Activated naive CD4-positive, alpha-beta T cell treated with anti-CD3 and anti-CD28 coated beads for 36 hours (primary cell): ENCODE measurements at regions of chr1 and their contacts with region 1.

Region 1: DNA sequence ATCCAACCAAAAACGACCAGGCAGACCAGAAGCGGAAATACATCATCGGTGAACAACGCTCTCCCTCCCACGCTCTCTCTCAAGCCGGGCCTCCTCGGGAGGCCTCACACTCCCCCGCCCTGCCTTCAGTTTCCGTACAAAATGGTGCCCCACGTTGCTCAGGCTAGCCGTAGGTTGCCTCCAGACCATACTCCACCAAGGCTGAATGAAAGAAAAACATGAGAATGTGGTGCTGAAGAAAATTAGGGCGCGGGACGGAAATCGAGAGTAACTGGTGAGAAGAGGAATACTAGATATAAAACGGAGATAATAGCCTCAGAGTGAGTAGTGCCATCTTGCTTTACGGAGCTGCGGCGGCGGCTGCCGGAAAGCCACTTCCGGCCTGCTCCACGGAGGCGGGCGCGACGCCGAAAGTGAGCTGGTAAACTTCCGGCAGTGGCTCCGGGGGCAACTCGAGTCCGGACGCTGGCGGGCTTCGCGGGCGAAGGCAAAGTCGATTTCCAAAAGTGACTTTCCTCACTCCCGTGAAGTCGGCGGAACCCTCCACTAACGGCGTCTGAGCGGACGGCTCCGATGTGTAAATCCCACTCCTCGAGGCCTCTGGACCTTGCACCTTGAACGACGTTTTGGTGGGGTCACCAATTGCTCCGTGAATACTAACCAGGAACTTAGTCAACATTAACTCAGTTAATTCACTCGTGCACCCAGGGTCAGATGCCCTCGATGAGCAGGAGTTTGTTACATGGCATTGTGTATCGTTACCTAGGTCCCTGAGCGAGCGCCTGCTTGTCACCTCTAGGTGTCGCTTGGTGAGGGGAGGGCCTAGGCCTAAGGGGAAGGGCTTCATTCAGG is at the start of gene SH3BP5L:
- DNase-seq: peak; percentile 95
- H3K4me3 Mint-ChIP-seq: peak within 1 kb of the TSS; percentile 90
- H3K27ac Mint-ChIP-seq: peak within 1 kb of the TSS; percentile 98
- H3K4me1 Mint-ChIP-seq: peaks cover 53% of the 10 kb centered on the region
- H3K27me3 Mint-ChIP-seq: no peaks in the 10 kb centered on the region
- total RNA-seq, gene SH3BP5L: 20.3 to 20.5 TPM

Region 2: DNA sequence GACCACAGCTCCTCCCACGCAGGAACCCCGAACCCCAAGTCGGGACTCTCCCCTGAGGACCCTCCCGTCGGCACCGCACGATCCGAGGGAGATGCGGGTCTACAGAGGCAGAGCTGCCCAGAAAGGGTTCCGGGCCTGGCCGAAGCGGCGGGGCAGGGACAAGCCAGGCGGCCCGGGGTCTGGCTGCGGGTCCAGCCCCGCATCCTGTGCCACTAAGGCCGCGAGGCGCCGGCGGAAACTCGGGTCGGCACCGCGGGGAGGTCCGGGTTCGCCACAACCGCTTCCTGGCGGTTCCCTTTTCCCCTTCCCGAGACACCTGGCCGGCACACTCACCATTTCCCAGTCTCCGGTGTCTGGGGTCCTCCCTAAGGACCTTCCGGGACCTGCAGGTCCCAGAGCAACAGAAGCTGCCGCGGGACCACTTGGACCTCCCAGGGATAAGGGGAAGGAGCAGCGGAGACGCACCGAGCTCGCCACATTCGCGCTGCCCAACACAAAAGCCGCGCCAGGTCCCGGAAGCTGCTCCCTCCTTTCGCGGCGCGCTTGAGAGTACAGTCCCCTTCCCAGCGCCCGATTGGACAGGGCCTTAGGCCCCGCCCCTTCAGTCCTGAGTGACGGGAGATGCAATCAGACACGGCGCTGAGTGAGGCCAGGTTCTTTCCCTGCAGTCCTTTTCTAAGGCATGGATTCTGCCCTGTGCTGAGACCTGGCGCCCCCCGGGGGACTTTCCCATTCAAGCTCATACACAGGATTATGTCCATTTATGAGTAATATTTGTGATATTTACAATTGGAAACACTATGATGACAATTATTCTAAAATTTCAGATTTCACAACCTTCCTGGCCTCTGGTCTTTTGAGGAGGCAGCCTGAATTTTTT is 1747.6 kb before region 1 on chr1 and contains the start of gene ZNF670:
- CTCF ChIA-PET with region 1: no interaction called
- intact Hi-C with region 1: loop called (anchors 2 kb)
- DNase-seq: peak; percentile 98
- H3K4me3 Mint-ChIP-seq: peak within 1 kb of the TSS; percentile 91
- H3K27ac Mint-ChIP-seq: peak within 1 kb of the TSS; percentile 90
- H3K4me1 Mint-ChIP-seq: peaks cover 22% of the 10 kb centered on the region
- H3K27me3 Mint-ChIP-seq: peaks cover 6% of the 10 kb centered on the region
- total RNA-seq, gene ZNF670: 4.1 to 4.3 TPM

Region 3: GRCh38 chr1:248611883-248612414 is 214.2 kb before region 1 on chr1:
- CTCF ChIA-PET with region 1: interaction called, 3 read pairs
- intact Hi-C with region 1: loop called (anchors 5 kb)
- DNase-seq: peak; percentile 53
- H3K4me3 Mint-ChIP-seq: no peak overlapping the region
- H3K27ac Mint-ChIP-seq: no peak overlapping the region
- H3K4me1 Mint-ChIP-seq: peaks cover 29% of the 10 kb centered on the region
- H3K27me3 Mint-ChIP-seq: no peaks in the 10 kb centered on the region

Region 4: GRCh38 chr1:248837794-248838356 is 11.7 kb after region 1 on chr1 and contains the start of gene ZNF672:
- CTCF ChIA-PET with region 1: interaction called, 27 read pairs
- intact Hi-C with region 1: loop called (anchors 1 kb)
- DNase-seq: peak; percentile 96
- H3K4me3 Mint-ChIP-seq: no peak within 1 kb of the TSS
- H3K27ac Mint-ChIP-seq: no peak within 1 kb of the TSS
- H3K4me1 Mint-ChIP-seq: peaks cover 22% of the 10 kb centered on the region
- H3K27me3 Mint-ChIP-seq: peaks cover 2% of the 10 kb centered on the region
- total RNA-seq, gene ZNF672: 51.6 to 53.4 TPM

Region 5: DNA sequence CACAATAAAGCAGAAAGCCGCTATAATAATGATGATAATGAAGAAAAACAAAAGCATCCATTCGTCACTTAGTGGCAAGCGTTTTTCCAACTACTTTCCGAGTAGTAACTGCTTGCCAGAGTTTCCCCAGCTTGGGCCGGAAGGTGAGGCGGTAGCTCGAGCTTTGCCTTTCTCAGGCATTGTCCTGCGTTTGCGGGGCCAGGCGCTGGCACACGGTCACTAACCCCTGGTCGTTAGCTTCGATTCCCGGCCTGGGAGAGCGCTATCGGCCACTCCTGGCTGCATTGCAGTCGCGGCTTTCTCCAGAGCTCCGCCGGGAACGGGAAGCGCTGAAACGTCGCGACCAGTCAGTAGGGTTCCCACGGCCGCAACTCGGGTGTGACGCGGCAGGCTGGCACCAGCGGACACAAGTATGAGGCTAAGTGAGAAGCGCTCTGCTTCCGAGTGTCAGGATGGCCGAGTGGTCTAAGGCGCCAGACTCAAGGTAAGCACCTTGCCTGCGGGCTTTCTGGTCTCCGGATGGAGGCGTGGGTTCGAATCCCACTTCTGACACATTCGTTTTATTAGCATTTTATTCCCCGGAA is 47.4 kb after region 1 on chr1:
- CTCF ChIA-PET with region 1: no interaction called
- intact Hi-C with region 1: loop called (anchors 1 kb)
- DNase-seq: peak; percentile 96
- H3K4me3 Mint-ChIP-seq: peak overlapping the region; percentile 85
- H3K27ac Mint-ChIP-seq: peak overlapping the region; percentile 93
- H3K4me1 Mint-ChIP-seq: peaks cover 16% of the 10 kb centered on the region
- H3K27me3 Mint-ChIP-seq: peaks cover 3% of the 10 kb centered on the region

Region 6: DNA sequence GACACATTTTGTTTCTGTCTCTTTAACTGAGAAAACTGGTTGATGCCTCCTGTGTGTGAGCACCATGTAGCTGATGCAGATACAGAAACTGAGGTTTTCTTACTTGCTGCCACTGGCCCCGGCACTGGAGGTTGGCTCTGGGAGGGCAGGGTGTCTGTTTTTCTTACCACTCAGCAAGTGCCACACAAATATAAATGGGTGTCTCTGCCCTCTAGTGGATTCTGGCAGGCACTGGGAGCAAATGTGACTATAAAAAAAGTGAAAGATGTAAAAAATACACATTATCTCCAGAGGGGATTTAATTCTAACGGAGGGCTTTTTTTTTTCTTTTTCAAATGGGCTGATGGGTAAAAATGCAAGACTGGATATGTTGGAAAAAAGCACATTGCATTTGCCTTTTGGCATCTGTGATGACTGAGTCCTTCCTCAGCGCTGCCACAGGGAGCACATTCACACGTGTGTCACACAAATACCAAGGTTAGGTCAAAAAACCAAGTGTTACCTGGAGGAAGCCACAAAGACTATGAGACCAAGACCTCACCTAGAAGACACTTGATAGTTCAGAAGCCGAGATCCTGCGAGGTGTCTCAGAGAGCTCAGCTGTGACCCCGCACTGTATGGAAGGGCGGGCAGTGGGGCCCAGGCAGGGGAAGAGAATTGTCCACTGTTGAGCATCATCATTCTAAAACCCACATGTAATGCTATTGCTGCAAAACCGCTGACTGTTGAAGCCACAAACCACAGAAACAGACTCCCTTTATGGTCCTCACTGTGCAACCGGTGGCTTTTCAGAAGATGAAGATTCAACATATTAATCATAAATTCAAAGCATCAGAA is 98.8 kb after region 1 on chr1:
- CTCF ChIA-PET with region 1: no interaction called
- intact Hi-C with region 1: loop called (anchors 1 kb)
- DNase-seq: peak; percentile 75
- H3K4me3 Mint-ChIP-seq: no peak overlapping the region
- H3K27ac Mint-ChIP-seq: no peak overlapping the region
- H3K4me1 Mint-ChIP-seq: peaks cover 8% of the 10 kb centered on the region
- H3K27me3 Mint-ChIP-seq: no peaks in the 10 kb centered on the region